Stomach (tissue), 19 donors: ENCODE measurements at regions of chr1 and their contacts with region 1.

Region 1: DNA sequence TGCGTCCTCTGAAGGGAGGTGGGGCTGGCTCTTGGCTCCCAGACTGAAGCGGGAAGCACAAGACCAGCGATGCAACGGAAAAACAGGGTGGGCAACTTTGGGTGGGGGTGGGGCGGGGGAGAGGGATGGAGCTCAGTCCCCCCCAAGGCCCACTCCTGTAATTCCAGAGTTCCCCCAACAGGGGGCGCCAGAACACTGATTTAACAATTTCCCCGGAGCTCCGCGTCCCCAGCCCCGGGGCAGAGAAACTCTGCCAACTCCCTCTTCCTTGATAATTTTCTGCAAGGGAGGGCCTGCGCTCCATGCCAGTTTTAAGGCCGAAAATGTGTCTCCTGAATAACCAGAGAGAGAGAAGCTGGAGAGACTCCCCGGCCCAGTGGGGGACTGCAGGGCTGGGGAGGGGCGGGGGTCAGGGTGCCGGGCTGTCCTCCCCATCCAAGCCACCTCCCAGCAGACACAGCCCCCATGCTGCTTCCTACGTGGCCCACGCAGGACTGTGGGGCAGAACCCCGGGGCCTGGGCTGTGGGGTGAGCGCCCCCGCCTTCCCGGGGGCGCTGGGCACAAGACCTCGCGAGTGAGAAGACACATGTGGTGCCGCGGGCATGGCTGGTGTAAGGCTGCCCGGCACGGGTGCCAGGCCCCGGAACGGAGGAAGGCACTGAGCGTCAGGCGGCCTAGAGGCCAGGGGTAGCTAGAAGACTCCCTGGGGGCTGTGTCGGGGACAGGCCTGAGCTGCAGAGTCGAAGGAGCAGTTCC is 51.4 kb downstream of the KIF21B start:
- DNase-seq: peak; percentile 70 to 89
- H3K4me3 ChIP-seq: no peak overlapping the region
- H3K27ac ChIP-seq: no peak overlapping the region
- H3K4me1 ChIP-seq: peaks cover 0 to 17% (median 13%) of the 10 kb centered on the region in 4 donors
- H3K27me3 ChIP-seq: no peaks in the 10 kb centered on the region
- CTCF ChIP-seq: peak in 4 of 7 experiments; percentile 54 to 97 (median 94)
- EP300 ChIP-seq: no peak
- POLR2A ChIP-seq: no peak

Region 2: DNA sequence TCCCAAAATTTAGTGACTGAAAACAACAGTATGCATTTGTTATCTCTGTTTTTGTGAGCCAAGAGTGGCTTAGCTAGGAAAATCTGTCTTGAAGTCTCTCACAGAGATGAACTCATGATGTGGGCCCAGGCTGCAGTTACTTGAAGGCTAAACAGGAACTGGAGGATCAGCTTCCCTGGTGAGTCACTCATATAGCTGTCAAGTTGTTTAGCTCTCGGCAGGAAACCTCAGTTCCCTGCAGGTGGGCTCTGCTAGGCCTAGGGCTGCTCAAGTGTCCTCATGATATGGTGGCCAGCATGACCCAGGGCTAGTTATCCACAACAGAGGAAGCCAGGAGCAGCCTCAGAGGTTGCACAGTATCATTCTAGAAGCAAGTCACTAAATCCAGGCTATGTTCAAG is 272.3 kb before region 1 on chr1:
- intact Hi-C with region 1: no loop called
- DNase-seq: peak in 1 of 2 donors; percentile 24
- H3K4me3 ChIP-seq: no peak overlapping the region
- H3K27ac ChIP-seq: no peak overlapping the region
- H3K4me1 ChIP-seq: no peaks in the 10 kb centered on the region
- H3K27me3 ChIP-seq: no peaks in the 10 kb centered on the region
- CTCF ChIP-seq: no peak
- EP300 ChIP-seq: no peak
- POLR2A ChIP-seq: no peak

Region 3: DNA sequence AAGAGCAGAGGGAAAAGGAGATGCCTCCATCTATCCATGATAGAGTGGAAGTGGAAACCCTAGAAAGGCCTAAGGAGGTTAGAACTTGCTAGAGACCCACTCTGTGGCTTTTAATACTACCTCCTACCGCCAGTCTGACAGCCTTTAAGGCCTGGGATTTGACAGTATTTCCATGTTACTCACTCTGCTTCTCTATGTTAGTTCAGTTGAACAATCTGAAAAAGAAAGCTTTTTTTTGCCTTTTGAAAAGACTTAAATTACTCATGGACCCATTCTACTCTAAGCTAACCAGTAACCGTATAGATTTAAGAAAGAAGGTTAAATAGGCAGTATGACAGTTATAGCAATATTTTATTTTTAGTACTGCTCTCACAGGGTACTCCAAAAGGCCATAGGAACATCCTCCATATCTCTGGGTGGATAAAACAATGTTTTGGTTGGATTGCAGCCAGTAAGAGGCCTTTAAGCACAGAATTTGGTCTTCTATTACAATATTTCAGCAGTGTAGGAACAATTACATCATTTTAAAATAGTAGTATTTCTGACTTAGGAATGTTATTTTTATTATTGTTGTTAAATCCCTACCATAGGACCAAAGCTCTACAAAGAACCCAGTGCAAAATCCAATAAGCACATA is 115.3 kb before region 1 on chr1:
- intact Hi-C with region 1: no loop called
- DNase-seq: no peak
- H3K4me3 ChIP-seq: no peak overlapping the region
- H3K27ac ChIP-seq: no peak overlapping the region
- H3K4me1 ChIP-seq: no peaks in the 10 kb centered on the region
- H3K27me3 ChIP-seq: no peaks in the 10 kb centered on the region
- CTCF ChIP-seq: no peak
- EP300 ChIP-seq: no peak
- POLR2A ChIP-seq: no peak

Region 4: GRCh38 chr1:201042779-201043461 is 70.8 kb after region 1 on chr1:
- intact Hi-C with region 1: loop called (anchors 5 kb)
- DNase-seq: peak; percentile 67 to 89
- H3K4me3 ChIP-seq: no peak overlapping the region
- H3K27ac ChIP-seq: no peak overlapping the region
- H3K4me1 ChIP-seq: peaks cover 0 to 7% (median 3%) of the 10 kb centered on the region in 4 donors
- H3K27me3 ChIP-seq: no peaks in the 10 kb centered on the region
- CTCF ChIP-seq: peak in 5 of 7 experiments; percentile 71 to 93 (median 79)
- EP300 ChIP-seq: no peak
- POLR2A ChIP-seq: no peak

Region 5: DNA sequence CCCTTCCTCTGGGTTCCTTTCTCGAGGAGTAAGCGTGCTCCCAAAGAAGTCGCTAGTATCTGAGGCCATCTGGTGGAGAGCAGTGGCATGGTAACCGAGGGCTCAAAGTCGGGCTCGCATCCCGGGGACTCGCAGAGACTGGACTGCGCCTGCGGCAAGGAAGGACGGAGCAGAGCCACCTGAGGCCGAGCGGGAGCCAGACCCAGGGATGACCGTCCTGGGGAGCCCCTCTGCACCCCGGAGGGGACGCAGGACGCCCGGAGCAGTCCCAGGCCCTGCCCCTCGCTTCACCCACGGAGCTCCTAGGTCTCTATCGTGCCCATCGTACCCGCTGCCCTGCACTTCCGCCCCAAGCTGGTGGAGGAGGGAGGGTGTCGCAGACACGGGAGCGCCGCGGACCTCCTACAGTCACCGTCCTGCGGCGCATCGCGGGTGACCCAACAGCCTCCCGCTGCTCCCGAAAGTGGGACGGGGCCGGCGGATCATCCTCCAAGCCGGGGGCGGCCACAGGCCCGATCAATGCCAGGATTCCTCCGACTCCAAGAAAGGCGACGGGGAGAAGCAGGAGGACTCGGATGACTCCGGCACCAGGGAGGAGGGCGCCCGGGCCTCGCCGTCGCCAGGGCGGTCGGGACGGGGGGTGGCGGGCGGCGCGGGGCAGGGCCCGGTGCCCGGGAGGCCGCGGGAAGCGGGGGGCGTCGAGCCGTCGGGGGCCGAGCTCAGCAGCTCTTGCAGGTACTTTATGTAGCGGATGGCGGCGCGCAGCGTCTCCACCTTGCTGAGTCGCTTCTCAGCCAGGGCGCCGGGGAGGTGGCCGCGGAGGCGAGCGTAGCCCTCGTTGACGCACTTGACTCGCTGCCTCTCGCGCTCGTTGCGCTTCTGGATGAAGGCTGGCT is 142.4 kb after region 1 on chr1:
- intact Hi-C with region 1: loop called (anchors 5 kb)
- DNase-seq: peak; percentile 88 to 96
- H3K4me3 ChIP-seq: peak overlapping the region; percentile 51 to 75 (median 66)
- H3K27ac ChIP-seq: peak overlapping the region in 3 of 5 donors; percentile 55 to 76 (median 56)
- H3K4me1 ChIP-seq: peaks cover 11 to 23% (median 16%) of the 10 kb centered on the region in 4 donors
- H3K27me3 ChIP-seq: peaks cover 0 to 36% (median 13%) of the 10 kb centered on the region in 3 donors
- CTCF ChIP-seq: peak in 5 of 7 experiments; percentile 74 to 90 (median 82)
- EP300 ChIP-seq: no peak
- POLR2A ChIP-seq: no peak

Region 6: DNA sequence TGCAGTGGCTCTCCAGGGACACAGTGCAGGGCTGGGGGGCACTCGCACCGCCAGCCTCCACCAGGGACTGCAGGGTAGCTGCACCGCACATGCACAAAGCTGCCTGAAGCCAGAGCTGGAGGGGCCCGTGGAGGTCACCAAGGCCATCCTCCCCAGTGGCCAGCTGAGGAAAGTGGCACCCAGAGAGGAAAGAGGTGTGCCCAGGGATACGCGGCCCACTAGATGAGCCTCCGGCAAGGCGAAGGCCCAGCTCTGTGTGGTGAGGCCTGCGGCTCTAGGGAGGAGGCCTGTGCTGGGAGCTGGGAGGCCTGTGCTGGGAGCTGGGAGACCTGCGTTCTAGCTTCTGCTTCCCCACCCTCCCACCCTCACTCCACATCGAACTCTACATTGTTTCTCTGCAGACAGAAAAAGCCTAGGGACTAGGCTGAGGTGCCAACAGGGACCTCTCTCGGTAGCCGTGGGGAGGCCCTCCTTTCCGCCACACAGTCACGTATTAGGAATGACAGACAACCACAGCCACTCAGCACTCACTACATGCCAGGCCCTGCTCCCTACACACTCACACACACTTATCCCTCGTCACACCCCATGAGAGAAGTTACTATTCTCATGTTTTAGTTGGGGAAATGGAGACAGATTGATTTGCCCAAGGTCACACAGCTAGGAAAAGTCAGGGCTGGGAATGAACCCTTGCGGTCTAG is 155.8 kb after region 1 on chr1:
- intact Hi-C with region 1: no loop called
- DNase-seq: no peak
- H3K4me3 ChIP-seq: no peak overlapping the region
- H3K27ac ChIP-seq: peak overlapping the region in 1 of 5 donors; percentile 55
- H3K4me1 ChIP-seq: peaks cover 0 to 21% (median 15%) of the 10 kb centered on the region in 4 donors
- H3K27me3 ChIP-seq: peaks cover 0 to 17% (median 0%) of the 10 kb centered on the region in 3 donors
- CTCF ChIP-seq: no peak
- EP300 ChIP-seq: no peak
- POLR2A ChIP-seq: no peak

Region 7: DNA sequence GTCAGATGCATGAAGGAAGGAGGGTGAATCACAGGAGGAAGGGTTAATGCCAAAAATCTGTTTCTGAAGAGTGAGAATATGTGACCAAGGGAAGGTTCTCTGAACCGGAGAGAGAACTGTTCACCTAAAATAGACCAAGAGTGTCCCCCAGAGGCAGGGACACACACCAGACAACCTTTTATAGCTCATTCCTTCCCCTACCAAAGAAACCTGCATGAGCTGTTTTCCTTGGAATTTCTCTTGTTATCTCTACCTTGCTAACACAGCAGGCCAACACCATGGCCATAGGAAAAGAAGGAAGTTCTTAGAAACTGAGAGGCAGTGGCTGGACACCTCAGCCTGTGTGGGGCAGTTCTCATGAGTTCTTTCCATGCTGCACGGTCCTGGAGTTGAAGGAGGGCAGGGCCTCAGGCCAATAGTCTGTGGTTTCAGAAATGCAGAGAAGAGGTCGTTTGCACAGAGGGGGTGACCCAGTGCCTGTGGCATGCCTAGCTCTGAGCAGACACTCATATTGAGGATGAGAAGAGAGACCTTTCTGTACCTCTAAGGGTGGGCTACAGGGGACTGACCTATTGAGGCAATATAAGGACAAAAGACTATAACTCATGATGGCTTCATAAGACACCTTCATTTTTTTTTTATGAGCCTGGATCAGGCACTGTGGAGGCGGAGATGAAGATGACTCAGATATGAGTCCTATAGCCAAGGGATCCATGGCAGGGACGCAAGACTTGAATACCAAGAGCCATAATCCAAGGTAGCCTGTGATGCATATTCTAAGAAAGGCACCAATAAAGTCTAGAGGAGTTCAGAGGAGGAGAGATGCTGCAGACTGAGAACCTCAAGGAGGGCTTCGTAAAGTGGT is 257.9 kb after region 1 on chr1:
- intact Hi-C with region 1: loop called (anchors 10 kb)
- DNase-seq: no peak
- H3K4me3 ChIP-seq: no peak overlapping the region
- H3K27ac ChIP-seq: no peak overlapping the region
- H3K4me1 ChIP-seq: no peaks in the 10 kb centered on the region
- H3K27me3 ChIP-seq: peaks cover 0 to 13% (median 0%) of the 10 kb centered on the region in 3 donors
- CTCF ChIP-seq: no peak
- EP300 ChIP-seq: no peak
- POLR2A ChIP-seq: no peak